Dendritic cell treated with granulocyte-macrophage colony-stimulating factor and Interleukin-4, amounts not matched to agents 40 ng/mL and 50 ng/mL, for 4 days (primary cell): ENCODE measurements at regions of chr22 and their contacts with region 1.

Region 1: GRCh38 chr22:30212363-30212995 is 34.1 kb downstream of the LIF start:
- H3K4me3 Mint-ChIP-seq: no peak overlapping the region
- H3K27ac Mint-ChIP-seq: peak overlapping the region; percentile 37
- H3K4me1 Mint-ChIP-seq: peaks cover 40% of the 10 kb centered on the region
- H3K27me3 Mint-ChIP-seq: peaks cover 22% of the 10 kb centered on the region

Region 2: DNA sequence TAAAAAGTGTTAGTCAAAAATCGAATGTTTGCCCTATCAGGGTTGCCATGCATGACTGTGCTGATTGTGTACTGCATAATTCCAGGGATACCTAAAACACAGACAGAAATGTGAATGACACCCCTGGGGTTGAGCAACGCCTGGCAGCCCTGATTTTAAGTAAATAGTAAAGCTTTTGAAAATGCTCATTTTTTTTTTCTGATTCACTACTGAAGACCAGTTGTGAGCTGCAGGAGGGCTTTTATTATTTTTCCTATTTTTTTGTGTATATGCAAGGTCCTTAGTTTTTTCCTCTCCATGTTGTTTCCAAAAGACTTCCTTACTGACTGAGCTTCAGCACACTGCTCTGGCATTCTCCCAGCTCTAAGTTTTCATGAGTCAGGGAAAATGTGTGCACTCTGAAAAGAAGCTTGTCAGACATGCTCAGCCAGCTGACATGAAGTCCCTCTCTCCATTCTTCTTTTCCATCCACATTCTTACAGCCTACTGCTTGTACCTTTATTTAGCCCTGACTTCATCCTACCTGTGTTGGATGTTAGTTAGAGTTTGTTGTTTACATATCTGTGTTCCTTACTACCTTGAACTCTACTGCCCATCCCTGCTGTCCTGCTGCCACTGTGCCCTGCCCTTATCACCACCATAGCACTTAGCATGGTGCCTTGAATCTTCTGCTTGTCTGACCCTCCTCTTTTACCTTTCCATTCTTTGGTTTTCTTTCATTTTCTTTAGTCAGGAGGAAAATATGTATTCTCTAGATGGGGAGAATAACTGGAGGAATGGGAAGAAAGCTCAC is 52.7 kb before region 1 on chr22:
- intact Hi-C with region 1: loop called (anchors 10 kb)
- H3K4me3 Mint-ChIP-seq: no peak overlapping the region
- H3K27ac Mint-ChIP-seq: no peak overlapping the region
- H3K4me1 Mint-ChIP-seq: peaks cover 5% of the 10 kb centered on the region
- H3K27me3 Mint-ChIP-seq: peaks cover 9% of the 10 kb centered on the region

Region 3: GRCh38 chr22:30196141-30196879 is 16.2 kb before region 1 on chr22:
- intact Hi-C with region 1: no loop called
- H3K4me3 Mint-ChIP-seq: no peak overlapping the region
- H3K27ac Mint-ChIP-seq: no peak overlapping the region
- H3K4me1 Mint-ChIP-seq: peaks cover 53% of the 10 kb centered on the region
- H3K27me3 Mint-ChIP-seq: no peaks in the 10 kb centered on the region

Region 4: DNA sequence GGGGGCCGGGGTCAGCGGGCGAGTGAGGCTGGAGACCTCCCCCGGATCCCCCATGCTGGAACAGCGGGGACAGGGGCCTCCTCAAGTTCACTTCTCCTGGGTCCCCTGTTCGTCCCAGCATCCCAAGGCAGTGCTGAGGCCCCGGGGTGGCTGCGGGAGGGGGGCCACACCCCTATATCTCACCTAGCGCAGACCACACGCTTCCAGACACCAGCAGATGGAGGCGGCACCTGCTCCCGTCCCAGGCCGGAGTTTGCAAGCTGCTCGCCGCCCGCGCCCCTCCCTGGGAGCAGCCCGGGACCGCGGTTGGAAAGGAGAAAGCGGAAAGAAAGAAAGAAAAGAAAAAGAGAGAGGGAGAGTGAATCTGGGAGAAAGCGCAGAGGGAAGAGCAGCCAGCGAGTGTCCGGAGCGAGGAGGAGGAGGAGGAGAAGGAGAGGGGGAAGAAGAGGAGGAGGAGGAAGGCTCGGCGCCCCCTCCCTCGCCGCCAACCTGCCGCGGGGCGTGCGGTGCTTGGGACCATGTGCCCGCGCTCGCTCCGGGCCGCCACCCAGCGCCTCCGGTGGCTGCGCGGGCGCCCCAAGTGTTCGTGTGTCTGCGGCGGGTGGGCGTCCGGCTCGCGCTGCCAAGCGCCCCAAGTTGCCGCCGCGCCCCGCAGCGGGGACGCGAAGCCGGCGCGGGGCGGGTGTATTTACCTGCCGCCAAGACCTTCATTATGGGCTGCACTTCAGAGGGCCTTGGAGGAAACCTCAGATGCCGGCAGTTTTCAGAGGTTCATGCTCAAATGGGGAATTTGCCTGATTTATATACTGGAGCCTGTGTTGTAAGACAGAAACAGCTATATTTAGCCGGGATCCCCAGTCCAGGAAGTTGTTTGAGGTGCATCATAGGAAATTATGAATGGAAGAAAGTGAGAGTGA is 33.8 kb after region 1 on chr22 and contains the start of gene LIF:
- intact Hi-C with region 1: no loop called
- H3K4me3 Mint-ChIP-seq: peak within 1 kb of the TSS; percentile 62
- H3K27ac Mint-ChIP-seq: peak within 1 kb of the TSS; percentile 1
- H3K4me1 Mint-ChIP-seq: peaks cover 38% of the 10 kb centered on the region
- H3K27me3 Mint-ChIP-seq: peaks cover 73% of the 10 kb centered on the region

Region 5: GRCh38 chr22:30326706-30327362 is 114.4 kb after region 1 on chr22 and contains the start of gene TBC1D10A:
- intact Hi-C with region 1: no loop called
- H3K4me3 Mint-ChIP-seq: peak within 1 kb of the TSS; percentile 86
- H3K27ac Mint-ChIP-seq: peak within 1 kb of the TSS; percentile 85
- H3K4me1 Mint-ChIP-seq: peaks cover 48% of the 10 kb centered on the region
- H3K27me3 Mint-ChIP-seq: no peaks in the 10 kb centered on the region